Posterior vena cava (tissue), 2 donors: ENCODE measurements at regions of chr19 and their contacts with region 1.

Region 1: DNA sequence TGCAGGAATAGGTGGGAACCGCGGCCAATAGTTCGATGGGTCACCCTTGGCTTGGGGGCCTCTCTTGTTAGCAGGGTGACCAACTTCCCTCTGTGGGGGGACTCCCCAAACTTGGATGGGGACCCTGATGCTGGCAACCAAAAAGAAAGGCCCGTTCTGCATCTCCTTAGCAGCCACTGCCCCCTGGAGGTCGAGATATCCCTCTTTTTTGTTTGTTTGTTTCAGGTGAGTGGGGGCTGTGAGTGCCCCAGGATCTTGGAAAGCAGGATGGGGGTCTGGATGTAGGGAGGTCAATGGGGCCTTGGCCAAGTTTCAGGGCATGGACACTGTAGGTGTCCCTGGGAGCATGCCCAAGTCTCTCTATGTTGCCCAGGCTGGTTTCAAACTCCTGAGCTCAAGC is 7.7 kb upstream of the CRTC1 start:
- DNase-seq: no peak

Region 2: DNA sequence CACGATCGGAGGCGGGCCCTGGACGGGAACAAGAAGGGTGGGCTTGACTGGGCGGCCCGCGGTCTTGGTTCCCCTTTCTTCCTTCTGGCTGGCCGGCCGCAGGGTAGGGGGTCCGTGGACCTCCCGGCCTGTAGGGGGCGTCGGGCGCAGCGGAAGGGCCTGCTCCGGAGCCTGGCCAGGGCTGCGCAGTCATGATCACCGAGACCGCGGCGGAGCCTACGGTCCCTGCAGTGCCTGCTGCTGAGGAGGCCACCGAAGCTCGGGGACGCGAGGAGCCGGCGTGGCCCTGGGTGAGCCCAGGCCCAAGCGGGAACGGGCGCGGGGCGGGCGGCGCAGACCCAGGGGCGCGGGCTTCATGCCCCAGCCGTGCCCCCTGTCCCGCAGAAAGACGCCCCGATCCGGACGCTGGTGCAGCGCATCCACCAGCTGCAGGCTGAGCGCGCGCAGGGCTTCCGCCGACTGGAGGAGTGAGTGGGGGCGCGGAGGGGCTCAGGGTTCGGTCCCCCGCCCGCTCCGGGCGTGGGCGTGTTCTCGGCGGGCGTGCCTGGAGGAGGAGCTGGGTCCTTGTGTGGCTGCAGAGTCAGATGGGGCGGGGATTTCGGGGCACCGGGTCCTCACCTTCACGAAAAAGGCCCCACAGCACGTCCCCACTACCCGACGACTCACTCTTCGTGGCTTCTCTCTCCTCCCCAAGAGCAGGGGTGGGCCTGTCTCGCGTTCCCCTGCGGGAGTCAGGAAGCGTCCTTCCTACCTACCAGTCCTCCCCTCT is 87.0 kb before region 1 on chr19 and contains the start of gene REX1BD:
- intact Hi-C with region 1: loop called in 1 of 2 experiments (anchors 5 kb)
- DNase-seq: peak; percentile 97
- total RNA-seq, gene REX1BD: 38.0 to 48.1 TPM

Region 3: GRCh38 chr19:18603255-18603957 is 72.4 kb before region 1 on chr19:
- intact Hi-C with region 1: loop called in 1 of 2 experiments (anchors 10 kb)
- DNase-seq: no peak

Region 4: DNA sequence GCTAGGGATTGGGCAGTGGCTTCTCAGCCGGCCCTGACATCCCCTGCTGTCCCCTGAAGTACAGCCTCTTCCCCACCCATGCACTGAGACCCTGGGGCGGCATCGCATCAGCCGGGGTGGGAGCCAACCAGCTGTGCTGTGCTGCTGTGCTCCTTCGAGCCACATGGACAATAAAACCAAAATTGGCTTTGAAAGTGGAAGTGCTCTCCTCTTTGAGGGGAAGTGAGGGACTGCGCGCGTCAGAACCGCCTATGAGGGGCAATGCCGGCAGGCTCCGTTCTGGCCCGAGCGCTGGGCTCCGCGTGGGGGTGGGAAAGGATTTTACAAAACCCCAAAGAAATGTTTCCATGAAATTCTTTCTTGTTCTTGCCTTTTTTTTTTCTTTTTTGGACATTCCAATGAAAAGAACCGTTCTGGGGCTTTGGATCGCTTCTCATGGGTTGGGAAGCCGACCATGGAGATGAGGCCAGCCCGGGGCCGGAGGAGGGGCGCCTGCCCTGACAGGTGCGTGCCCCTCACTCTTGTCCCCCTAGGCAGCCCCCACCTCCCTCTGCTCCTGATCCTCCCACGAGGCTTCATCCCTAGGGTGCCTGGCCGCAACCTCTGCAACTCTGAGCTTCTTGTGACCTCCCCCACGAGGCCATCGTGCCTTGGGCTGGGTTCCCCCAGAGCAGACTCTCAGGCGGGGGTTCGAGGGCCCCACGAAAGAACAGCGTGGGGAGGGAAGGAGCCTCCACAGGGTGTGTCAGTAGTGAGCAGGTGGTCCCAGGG is 16.3 kb before region 1 on chr19:
- intact Hi-C with region 1: loop called in 1 of 2 experiments (anchors 1 kb)
- DNase-seq: peak; percentile 95

Region 5: DNA sequence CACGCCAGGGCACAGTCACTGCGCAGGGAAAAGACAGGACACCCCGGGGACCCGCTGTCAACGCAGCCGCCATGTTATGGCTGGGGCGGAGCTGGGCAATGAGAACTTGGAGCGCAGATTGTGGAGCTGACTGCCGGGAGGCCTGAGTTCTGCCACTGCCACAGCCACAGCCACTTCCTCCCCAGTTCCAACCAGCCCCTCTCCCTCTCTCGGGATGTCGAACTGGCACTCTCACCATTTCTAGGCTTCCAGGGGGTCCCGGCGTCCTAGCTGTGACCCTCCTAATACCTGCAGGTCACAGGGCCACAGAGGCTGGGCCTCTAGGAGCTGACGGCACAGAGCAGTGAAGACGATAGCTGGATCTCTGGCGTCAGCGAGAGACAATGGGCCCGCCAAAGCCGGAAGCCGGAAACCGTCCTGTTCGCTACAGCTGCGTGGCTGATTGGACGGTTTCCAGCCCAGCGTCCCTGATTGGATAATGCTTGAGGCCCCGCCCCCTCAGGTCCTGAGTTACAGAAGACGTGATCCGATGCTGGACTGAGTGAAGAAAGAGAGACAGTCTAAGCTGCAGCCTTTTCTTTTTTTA is 1145.7 kb after region 1 on chr19 and contains the start of gene ZNF506:
- intact Hi-C with region 1: no loop called
- DNase-seq: peak; percentile 100
- total RNA-seq, gene ZNF506: 19.6 to 23.0 TPM